ENCODE measurements at regions of chr15 and their contacts with region 1.

Region 1: DNA sequence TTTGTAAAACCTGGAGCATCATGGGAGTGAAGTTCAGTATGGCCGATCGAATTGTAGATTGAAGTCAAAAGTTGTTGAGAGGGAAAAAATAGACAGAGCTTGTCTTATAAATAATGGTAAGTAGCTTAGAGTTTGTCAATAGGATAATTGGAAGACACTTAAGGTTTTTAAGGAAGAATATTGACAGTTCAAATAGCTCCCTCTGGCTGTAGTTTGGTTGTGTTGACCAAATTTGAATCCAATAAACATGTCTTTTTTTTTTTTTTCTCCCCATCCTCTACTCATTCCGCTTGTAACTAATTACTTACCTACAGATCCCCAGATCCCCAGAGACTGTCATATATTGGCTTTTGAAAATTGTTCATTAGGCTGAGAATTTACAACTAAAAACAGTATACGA is 677.0 kb downstream of the AGBL1 start:
- DNase-seq: no peak
- ATAC-seq: no peak
- H3K4me3 ChIP-seq: no peak overlapping the region
- H3K27ac ChIP-seq: no peak overlapping the region
- H3K4me1 ChIP-seq: no peaks in the 10 kb centered on the region
- H3K27me3 ChIP-seq: no peaks in the 10 kb centered on the region
- CTCF ChIP-seq: no peak
- POLR2A ChIP-seq: no peak
- RAD21 ChIP-seq: no peak

Region 2: GRCh38 chr15:86295511-86295910 is 461.2 kb before region 1 on chr15:
- CTCF ChIA-PET with region 1: no interaction called
- POLR2A ChIA-PET with region 1: interaction called, 16 read pairs
- dilution Hi-C with region 1: no loop called
- in situ Hi-C with region 1: no loop called
- intact Hi-C with region 1: no loop called
- DNase-seq: no peak
- ATAC-seq: no peak
- H3K4me3 ChIP-seq: no peak overlapping the region
- H3K27ac ChIP-seq: no peak overlapping the region
- H3K4me1 ChIP-seq: no peaks in the 10 kb centered on the region
- H3K27me3 ChIP-seq: no peaks in the 10 kb centered on the region
- CTCF ChIP-seq: no peak
- POLR2A ChIP-seq: no peak
- RAD21 ChIP-seq: no peak

Region 3: DNA sequence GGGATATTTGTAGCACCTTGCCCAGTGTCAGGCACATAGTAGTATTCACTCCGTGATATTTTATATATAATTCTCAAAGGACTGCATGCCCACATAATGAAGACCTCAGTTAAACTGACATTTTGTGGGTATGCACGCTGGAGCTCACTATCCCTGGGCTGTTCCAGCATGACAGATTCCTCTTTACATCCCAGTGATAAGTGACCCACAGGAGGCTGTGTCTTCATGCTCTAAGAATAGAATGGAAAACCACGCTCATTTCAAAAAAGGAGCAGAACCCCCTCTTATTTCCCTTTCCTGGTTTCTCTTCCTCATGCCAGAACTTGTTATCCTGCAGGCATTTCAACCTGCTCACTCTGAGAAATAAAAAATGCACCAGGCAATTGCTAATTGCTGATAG is 40.4 kb after region 1 on chr15:
- CTCF ChIA-PET with region 1: no interaction called
- POLR2A ChIA-PET with region 1: no interaction called
- dilution Hi-C with region 1: no loop called
- in situ Hi-C with region 1: no loop called
- intact Hi-C with region 1: no loop called
- DNase-seq: no peak
- ATAC-seq: no peak
- H3K4me3 ChIP-seq: no peak overlapping the region
- H3K27ac ChIP-seq: no peak overlapping the region
- H3K4me1 ChIP-seq: no peaks in the 10 kb centered on the region
- H3K27me3 ChIP-seq: no peaks in the 10 kb centered on the region
- CTCF ChIP-seq: no peak
- POLR2A ChIP-seq: no peak
- RAD21 ChIP-seq: no peak